ENCODE measurements at regions of chr1 and their contacts with region 1.

Region 1: GRCh38 chr1:116817582-116818064 is 63.4 kb downstream of the CD2 start:
- DNase-seq: peak; percentile 43 to 67 (median 63)
- ATAC-seq: peak; percentile 85
- H3K4me3 ChIP-seq: no peak overlapping the region
- H3K4me3 Mint-ChIP-seq: peak overlapping the region; percentile 4 to 75 (median 58)
- H3K27ac ChIP-seq: no peak overlapping the region
- H3K27ac Mint-ChIP-seq: peak overlapping the region in 8 of 9 donors; percentile 22 to 85 (median 82)
- H3K4me1 ChIP-seq: peaks cover 23 to 33% of the 10 kb centered on the region in 2 donors
- H3K4me1 Mint-ChIP-seq: peaks cover 20 to 58% (median 34%) of the 10 kb centered on the region in 7 donors
- H3K27me3 ChIP-seq: no peaks in the 10 kb centered on the region
- H3K27me3 Mint-ChIP-seq: no peaks in the 10 kb centered on the region

Region 2: GRCh38 chr1:116504308-116505156 is 313.1 kb before region 1 on chr1:
- CTCF ChIA-PET with region 1: no interaction called
- POLR2A ChIA-PET with region 1: interaction called, 3 read pairs
- intact Hi-C with region 1: loop called in 1 of 2 experiments (anchors 5 kb)
- DNase-seq: peak; percentile 49 to 86 (median 73)
- ATAC-seq: peak; percentile 96
- H3K4me3 ChIP-seq: peak overlapping the region; percentile 1
- H3K4me3 Mint-ChIP-seq: peak overlapping the region in 8 of 10 donors; percentile 11 to 77 (median 48)
- H3K27ac ChIP-seq: peak overlapping the region; percentile 48
- H3K27ac Mint-ChIP-seq: peak overlapping the region; percentile 65 to 92 (median 77)
- H3K4me1 ChIP-seq: peaks cover 20 to 49% of the 10 kb centered on the region in 2 donors
- H3K4me1 Mint-ChIP-seq: peaks cover 21 to 89% (median 34%) of the 10 kb centered on the region in 7 donors
- H3K27me3 ChIP-seq: no peaks in the 10 kb centered on the region
- H3K27me3 Mint-ChIP-seq: no peaks in the 10 kb centered on the region

Region 3: DNA sequence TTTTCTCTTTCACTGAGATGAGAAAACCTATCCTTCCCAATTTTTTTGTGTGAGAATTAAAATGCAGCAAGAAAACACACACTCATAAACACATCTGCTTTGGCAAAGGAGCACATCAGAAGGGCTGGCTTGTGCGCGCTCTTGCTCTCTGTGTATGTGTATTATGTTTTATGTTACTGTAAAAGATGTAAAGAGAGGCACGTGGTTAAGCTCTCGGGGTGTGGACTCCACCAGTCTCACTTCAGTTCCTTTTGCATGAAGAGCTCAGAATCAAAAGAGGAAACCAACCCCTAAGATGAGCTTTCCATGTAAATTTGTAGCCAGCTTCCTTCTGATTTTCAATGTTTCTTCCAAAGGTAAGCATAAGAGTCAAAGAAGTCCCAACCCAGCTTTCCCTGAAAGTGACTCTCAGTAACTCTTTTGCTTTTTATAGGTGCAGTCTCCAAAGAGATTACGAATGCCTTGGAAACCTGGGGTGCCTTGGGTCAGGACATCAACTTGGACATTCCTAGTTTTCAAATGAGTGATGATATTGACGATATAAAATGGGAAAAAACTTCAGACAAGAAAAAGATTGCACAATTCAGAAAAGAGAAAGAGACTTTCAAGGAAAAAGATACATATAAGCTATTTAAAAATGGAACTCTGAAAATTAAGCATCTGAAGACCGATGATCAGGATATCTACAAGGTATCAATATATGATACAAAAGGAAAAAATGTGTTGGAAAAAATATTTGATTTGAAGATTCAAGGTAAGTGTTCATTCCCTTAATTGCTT is 63.2 kb before region 1 on chr1 and contains the start of gene CD2:
- CTCF ChIA-PET with region 1: interaction called, 13 read pairs
- POLR2A ChIA-PET with region 1: interaction called, 16 read pairs
- intact Hi-C with region 1: loop called in 1 of 2 experiments (anchors 1 kb)
- DNase-seq: peak in 7 of 9 donors; percentile 58 to 79 (median 71)
- ATAC-seq: peak; percentile 91
- H3K4me3 ChIP-seq: peak within 1 kb of the TSS; percentile 90
- H3K4me3 Mint-ChIP-seq: peak within 1 kb of the TSS; percentile 91 to 100 (median 98)
- H3K27ac ChIP-seq: peak within 1 kb of the TSS; percentile 89
- H3K27ac Mint-ChIP-seq: peak within 1 kb of the TSS; percentile 93 to 99 (median 97)
- H3K4me1 ChIP-seq: peaks cover 27 to 31% of the 10 kb centered on the region in 2 donors
- H3K4me1 Mint-ChIP-seq: peaks cover 25 to 47% (median 43%) of the 10 kb centered on the region in 7 donors
- H3K27me3 ChIP-seq: no peaks in the 10 kb centered on the region
- H3K27me3 Mint-ChIP-seq: no peaks in the 10 kb centered on the region
- total RNA-seq, gene CD2: 105 to 307 (median 174) TPM

Region 4: GRCh38 chr1:116769561-116769977 is 48.1 kb before region 1 on chr1:
- CTCF ChIA-PET with region 1: interaction called, 26 read pairs
- POLR2A ChIA-PET with region 1: interaction called, 107 read pairs
- intact Hi-C with region 1: loop called (anchors 1 kb)
- DNase-seq: peak in 8 of 9 donors; percentile 60 to 92 (median 86)
- ATAC-seq: peak; percentile 91
- H3K4me3 ChIP-seq: peak overlapping the region; percentile 24
- H3K4me3 Mint-ChIP-seq: peak overlapping the region; percentile 51 to 99 (median 78)
- H3K27ac ChIP-seq: peak overlapping the region; percentile 89
- H3K27ac Mint-ChIP-seq: peak overlapping the region; percentile 84 to 100 (median 97)
- H3K4me1 ChIP-seq: peaks cover 80 to 81% of the 10 kb centered on the region in 2 donors
- H3K4me1 Mint-ChIP-seq: peaks cover 64 to 97% (median 91%) of the 10 kb centered on the region in 7 donors
- H3K27me3 ChIP-seq: no peaks in the 10 kb centered on the region
- H3K27me3 Mint-ChIP-seq: no peaks in the 10 kb centered on the region

Region 5: GRCh38 chr1:116806245-116806644 is 11.4 kb before region 1 on chr1:
- CTCF ChIA-PET with region 1: interaction called, 5 read pairs
- POLR2A ChIA-PET with region 1: interaction called, 3 read pairs
- intact Hi-C with region 1: loop called in 1 of 2 experiments (anchors 1 kb)
- DNase-seq: peak in 2 of 9 donors; percentile 6 to 44
- ATAC-seq: peak; percentile 50
- H3K4me3 ChIP-seq: peak overlapping the region; percentile 43
- H3K4me3 Mint-ChIP-seq: peak overlapping the region in 4 of 10 donors; percentile 16 to 85 (median 44)
- H3K27ac ChIP-seq: no peak overlapping the region
- H3K27ac Mint-ChIP-seq: peak overlapping the region; percentile 12 to 92 (median 67)
- H3K4me1 ChIP-seq: peaks cover 19 to 68% of the 10 kb centered on the region in 2 donors
- H3K4me1 Mint-ChIP-seq: peaks cover 53 to 87% (median 67%) of the 10 kb centered on the region in 7 donors
- H3K27me3 ChIP-seq: no peaks in the 10 kb centered on the region
- H3K27me3 Mint-ChIP-seq: no peaks in the 10 kb centered on the region

Region 6: GRCh38 chr1:116833718-116834117 is 16.1 kb after region 1 on chr1:
- CTCF ChIA-PET with region 1: no interaction called
- POLR2A ChIA-PET with region 1: no interaction called
- intact Hi-C with region 1: no loop called
- DNase-seq: no peak
- ATAC-seq: no peak
- H3K4me3 ChIP-seq: no peak overlapping the region
- H3K4me3 Mint-ChIP-seq: no peak overlapping the region
- H3K27ac ChIP-seq: no peak overlapping the region
- H3K27ac Mint-ChIP-seq: no peak overlapping the region
- H3K4me1 ChIP-seq: no peaks in the 10 kb centered on the region
- H3K4me1 Mint-ChIP-seq: peaks cover 0 to 18% (median 5%) of the 10 kb centered on the region in 7 donors
- H3K27me3 ChIP-seq: no peaks in the 10 kb centered on the region
- H3K27me3 Mint-ChIP-seq: peaks cover 0 to 3% (median 0%) of the 10 kb centered on the region in 5 donors

Region 7: GRCh38 chr1:116934586-116935207 is 117.1 kb after region 1 on chr1:
- CTCF ChIA-PET with region 1: interaction called, 4 read pairs
- POLR2A ChIA-PET with region 1: interaction called, 3 read pairs
- intact Hi-C with region 1: loop called in 1 of 2 experiments (anchors 1 kb)
- DNase-seq: peak in 5 of 9 donors; percentile 34 to 46 (median 39)
- ATAC-seq: peak; percentile 58
- H3K4me3 ChIP-seq: no peak overlapping the region
- H3K4me3 Mint-ChIP-seq: peak overlapping the region in 4 of 10 donors; percentile 4 to 40 (median 19)
- H3K27ac ChIP-seq: no peak overlapping the region
- H3K27ac Mint-ChIP-seq: peak overlapping the region in 8 of 9 donors; percentile 21 to 82 (median 52)
- H3K4me1 ChIP-seq: peaks cover 20 to 22% of the 10 kb centered on the region in 2 donors
- H3K4me1 Mint-ChIP-seq: peaks cover 14 to 28% (median 24%) of the 10 kb centered on the region in 7 donors
- H3K27me3 ChIP-seq: no peaks in the 10 kb centered on the region
- H3K27me3 Mint-ChIP-seq: no peaks in the 10 kb centered on the region

Region 8: GRCh38 chr1:117128323-117129079 is 310.9 kb after region 1 on chr1:
- CTCF ChIA-PET with region 1: interaction called, 3 read pairs
- POLR2A ChIA-PET with region 1: no interaction called
- intact Hi-C with region 1: loop called in 1 of 2 experiments (anchors 2 kb)
- DNase-seq: peak in 5 of 9 donors; percentile 24 to 42 (median 31)
- ATAC-seq: peak; percentile 61
- H3K4me3 ChIP-seq: no peak overlapping the region
- H3K4me3 Mint-ChIP-seq: no peak overlapping the region
- H3K27ac ChIP-seq: no peak overlapping the region
- H3K27ac Mint-ChIP-seq: no peak overlapping the region
- H3K4me1 ChIP-seq: no peaks in the 10 kb centered on the region
- H3K4me1 Mint-ChIP-seq: peaks cover 0 to 5% (median 5%) of the 10 kb centered on the region in 7 donors
- H3K27me3 ChIP-seq: no peaks in the 10 kb centered on the region
- H3K27me3 Mint-ChIP-seq: peaks cover 5 to 30% (median 12%) of the 10 kb centered on the region in 5 donors

Region 9: GRCh38 chr1:117147856-117148588 is 330.4 kb after region 1 on chr1:
- CTCF ChIA-PET with region 1: no interaction called
- POLR2A ChIA-PET with region 1: no interaction called
- intact Hi-C with region 1: no loop called
- DNase-seq: no peak
- ATAC-seq: no peak
- H3K4me3 ChIP-seq: no peak overlapping the region
- H3K4me3 Mint-ChIP-seq: no peak overlapping the region
- H3K27ac ChIP-seq: no peak overlapping the region
- H3K27ac Mint-ChIP-seq: no peak overlapping the region
- H3K4me1 ChIP-seq: no peaks in the 10 kb centered on the region
- H3K4me1 Mint-ChIP-seq: peaks cover 0 to 1% (median 0%) of the 10 kb centered on the region in 7 donors
- H3K27me3 ChIP-seq: no peaks in the 10 kb centered on the region
- H3K27me3 Mint-ChIP-seq: peaks cover 0 to 14% (median 12%) of the 10 kb centered on the region in 5 donors